Pancreas (tissue), 10 donors: ENCODE measurements at regions of chr7 and their contacts with region 1.

Region 1: GRCh38 chr7:113015032-113015645 is 71.5 kb downstream of the GPR85 start:
- DNase-seq: no peak
- ATAC-seq: peak in 3 of 4 donors; percentile 53 to 55 (median 53)
- H3K4me3 ChIP-seq: no peak overlapping the region
- H3K27ac ChIP-seq: no peak overlapping the region
- H3K4me1 ChIP-seq: no peaks in the 10 kb centered on the region
- H3K27me3 ChIP-seq: no peaks in the 10 kb centered on the region
- CTCF ChIP-seq: peak in 3 of 4 donors; percentile 28 to 39 (median 34)

Region 2: DNA sequence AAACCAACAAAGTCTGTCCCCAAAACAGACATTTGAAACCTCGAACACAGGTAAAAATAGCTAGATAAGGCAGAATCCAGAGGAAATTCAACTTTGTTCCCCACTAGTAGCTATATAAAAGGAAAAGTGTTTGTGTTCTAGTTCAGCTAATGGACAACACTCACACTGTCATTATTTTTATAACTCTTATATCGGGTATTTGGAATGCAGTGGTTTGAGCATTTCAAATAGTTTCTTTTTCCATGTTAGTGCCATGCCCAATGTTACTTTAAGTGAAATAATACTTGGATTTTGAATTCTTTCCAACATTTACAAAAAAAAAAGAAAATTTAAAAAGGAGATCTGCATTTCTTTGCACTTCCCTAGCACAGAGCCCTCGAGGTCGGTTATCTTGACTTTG is 1022.5 kb before region 1 on chr7:
- intact Hi-C with region 1: no loop called
- DNase-seq: no peak
- ATAC-seq: no peak
- H3K4me3 ChIP-seq: no peak overlapping the region
- H3K27ac ChIP-seq: no peak overlapping the region
- H3K4me1 ChIP-seq: no peaks in the 10 kb centered on the region
- H3K27me3 ChIP-seq: no peaks in the 10 kb centered on the region
- CTCF ChIP-seq: no peak

Region 3: GRCh38 chr7:113060100-113060499 is 45.0 kb after region 1 on chr7:
- intact Hi-C with region 1: no loop called
- DNase-seq: no peak
- ATAC-seq: no peak
- H3K4me3 ChIP-seq: no peak overlapping the region
- H3K27ac ChIP-seq: no peak overlapping the region
- H3K4me1 ChIP-seq: no peaks in the 10 kb centered on the region
- H3K27me3 ChIP-seq: no peaks in the 10 kb centered on the region
- CTCF ChIP-seq: no peak

Region 4: DNA sequence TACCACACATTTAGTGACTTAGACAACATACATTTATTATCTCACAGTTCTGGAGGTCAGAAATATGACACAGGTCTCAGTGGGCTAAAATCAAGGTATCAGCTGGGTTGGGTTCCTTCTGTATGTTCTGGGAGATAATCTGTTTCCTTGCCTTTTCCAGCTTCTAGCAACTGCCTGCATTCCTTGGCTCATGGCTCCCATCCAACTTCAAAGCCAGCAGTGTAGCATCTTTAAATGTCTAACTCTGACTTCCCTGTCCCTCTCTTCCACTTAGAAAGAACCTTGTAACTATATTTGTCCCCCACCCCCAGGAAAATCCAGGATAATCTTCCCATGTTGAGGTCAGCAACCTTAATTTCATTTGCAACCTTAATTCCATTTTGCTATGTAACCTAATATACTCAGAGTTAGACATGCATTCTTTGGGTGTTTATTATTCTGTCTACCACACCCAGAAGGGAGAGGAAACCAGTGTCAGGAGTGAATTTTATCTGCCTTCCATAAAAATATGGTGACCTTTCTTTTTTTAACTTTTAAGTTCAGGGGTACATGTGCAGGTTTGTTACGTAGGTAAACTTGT is 160.5 kb after region 1 on chr7:
- intact Hi-C with region 1: no loop called
- DNase-seq: no peak
- ATAC-seq: no peak
- H3K4me3 ChIP-seq: no peak overlapping the region
- H3K27ac ChIP-seq: no peak overlapping the region
- H3K4me1 ChIP-seq: no peaks in the 10 kb centered on the region
- H3K27me3 ChIP-seq: no peaks in the 10 kb centered on the region
- CTCF ChIP-seq: no peak

Region 5: DNA sequence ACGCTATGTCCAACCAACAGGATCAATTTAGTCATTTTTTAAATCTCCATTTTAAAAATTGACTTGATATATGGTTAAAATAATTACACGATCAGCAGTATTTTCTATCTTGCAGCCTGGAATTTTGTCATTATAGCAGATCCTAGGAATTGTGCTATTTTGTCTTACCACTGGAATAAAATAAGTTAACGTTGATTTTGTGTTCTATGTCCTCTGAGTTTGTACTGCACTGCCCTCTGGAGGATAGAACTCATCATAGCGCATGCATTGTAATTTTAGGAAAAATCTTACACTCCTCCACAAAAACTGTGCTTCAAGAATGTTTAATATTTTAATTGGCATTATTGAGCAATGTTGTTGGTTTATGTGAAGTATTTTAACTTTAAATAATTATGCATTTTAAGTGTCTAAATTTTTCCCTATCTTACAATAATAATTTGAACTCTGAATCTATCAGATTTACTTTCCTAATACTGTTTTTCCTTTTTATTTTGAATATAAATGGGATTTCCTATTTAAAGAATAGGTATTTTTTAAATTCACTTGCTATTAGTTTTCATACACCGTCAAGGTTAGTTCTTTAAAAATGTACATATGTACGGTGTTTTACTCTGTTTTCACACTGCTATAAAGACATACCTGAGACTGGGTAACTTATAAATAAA is 683.5 kb after region 1 on chr7:
- intact Hi-C with region 1: loop called in 2 of 3 experiments (anchors 5 to 10 kb)
- DNase-seq: peak in 1 of 6 donors; percentile 3
- ATAC-seq: peak in 3 of 4 donors; percentile 74 to 75 (median 75)
- H3K4me3 ChIP-seq: no peak overlapping the region
- H3K27ac ChIP-seq: no peak overlapping the region
- H3K4me1 ChIP-seq: no peaks in the 10 kb centered on the region
- H3K27me3 ChIP-seq: no peaks in the 10 kb centered on the region
- CTCF ChIP-seq: peak; percentile 40 to 60 (median 52)